Vagina (tissue), 2 donors: ENCODE measurements at regions of chr16 and their contacts with region 1.

Region 1: GRCh38 chr16:82888591-82889001 is 261.8 kb downstream of the CDH13 start:
- DNase-seq: no peak
- H3K4me3 ChIP-seq: no peak overlapping the region
- H3K27ac ChIP-seq: no peak overlapping the region
- H3K4me1 ChIP-seq: peaks cover 9% of the 10 kb centered on the region
- H3K27me3 ChIP-seq: no peaks in the 10 kb centered on the region
- CTCF ChIP-seq: no peak
- POLR2A ChIP-seq: no peak

Region 2: DNA sequence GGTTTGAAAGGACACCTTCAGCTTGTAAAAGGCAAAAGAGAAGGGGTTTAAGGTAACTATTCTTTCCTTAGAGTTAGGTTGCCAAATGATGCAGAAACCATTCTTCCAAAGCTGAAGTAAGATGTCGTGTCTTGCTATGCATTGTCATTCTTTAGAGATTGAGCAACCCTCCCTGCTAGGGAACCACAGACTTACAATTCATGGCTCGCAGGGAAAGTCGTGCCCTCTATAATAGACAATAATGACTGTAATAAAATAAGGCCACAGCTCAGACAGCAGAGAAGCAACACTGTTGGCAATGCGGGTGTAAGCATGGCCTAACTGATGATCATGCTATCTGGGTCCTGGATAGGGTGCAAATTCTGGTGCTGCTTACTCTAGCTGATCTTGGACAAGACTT is 391.5 kb before region 1 on chr16:
- intact Hi-C with region 1: loop called (anchors 5 kb)
- DNase-seq: no peak
- H3K4me3 ChIP-seq: no peak overlapping the region
- H3K27ac ChIP-seq: no peak overlapping the region
- H3K4me1 ChIP-seq: no peaks in the 10 kb centered on the region
- H3K27me3 ChIP-seq: no peaks in the 10 kb centered on the region
- CTCF ChIP-seq: no peak
- POLR2A ChIP-seq: no peak